Activated CD8-positive, alpha-beta T cell treated with anti-CD3 and anti-CD28 coated beads, Interleukin-2, amount 10 ng/mL, durations not matched to agents 7 days and 5 days (primary cell): ENCODE measurements at regions of chr17 and their contacts with region 1.

Region 1: DNA sequence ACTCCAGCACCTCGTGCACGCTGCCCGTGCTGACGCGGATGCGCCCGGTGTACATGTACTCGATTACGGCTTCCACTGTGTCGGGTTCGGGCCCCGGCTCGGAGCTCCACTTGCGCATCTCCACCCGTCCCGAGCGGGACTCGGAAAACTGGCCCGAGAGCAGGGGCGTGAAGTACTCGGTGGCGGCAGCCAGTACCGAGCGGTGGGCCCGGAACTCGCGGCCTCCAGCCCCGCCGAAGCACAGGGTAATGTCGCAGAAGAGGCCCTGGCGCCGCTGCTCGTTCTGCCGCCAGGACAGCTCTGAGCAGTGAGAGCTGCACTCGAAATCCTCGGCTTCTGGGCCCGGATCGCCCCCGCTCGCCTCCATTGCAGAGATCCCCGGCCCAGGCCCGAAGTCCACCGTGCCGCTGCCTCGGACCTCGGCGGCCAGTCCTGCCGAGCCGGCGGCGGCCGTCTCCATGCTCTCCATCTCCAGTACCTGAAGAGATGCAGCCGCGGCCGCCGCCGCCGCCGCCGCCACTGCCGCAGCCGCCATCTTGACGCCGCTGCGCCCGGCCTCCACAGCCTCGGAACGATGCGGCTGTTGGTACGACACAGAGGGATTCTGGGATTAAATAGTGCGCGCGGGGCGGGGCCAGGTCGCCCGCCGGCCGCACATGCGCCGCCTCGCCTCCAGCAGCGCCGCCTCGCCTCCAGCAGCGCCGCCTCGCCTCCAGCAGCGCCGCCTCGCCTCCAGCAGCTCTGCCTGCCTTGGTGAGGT is at the start of gene KLHL11:
- DNase-seq: peak; percentile 92
- ATAC-seq: peak; percentile 94
- H3K4me3 Mint-ChIP-seq: no peak within 1 kb of the TSS
- H3K27ac Mint-ChIP-seq: no peak within 1 kb of the TSS
- H3K4me1 Mint-ChIP-seq: peaks cover 25% of the 10 kb centered on the region
- H3K27me3 Mint-ChIP-seq: no peaks in the 10 kb centered on the region
- total RNA-seq, gene KLHL11: 12.3 to 13.2 TPM

Region 2: DNA sequence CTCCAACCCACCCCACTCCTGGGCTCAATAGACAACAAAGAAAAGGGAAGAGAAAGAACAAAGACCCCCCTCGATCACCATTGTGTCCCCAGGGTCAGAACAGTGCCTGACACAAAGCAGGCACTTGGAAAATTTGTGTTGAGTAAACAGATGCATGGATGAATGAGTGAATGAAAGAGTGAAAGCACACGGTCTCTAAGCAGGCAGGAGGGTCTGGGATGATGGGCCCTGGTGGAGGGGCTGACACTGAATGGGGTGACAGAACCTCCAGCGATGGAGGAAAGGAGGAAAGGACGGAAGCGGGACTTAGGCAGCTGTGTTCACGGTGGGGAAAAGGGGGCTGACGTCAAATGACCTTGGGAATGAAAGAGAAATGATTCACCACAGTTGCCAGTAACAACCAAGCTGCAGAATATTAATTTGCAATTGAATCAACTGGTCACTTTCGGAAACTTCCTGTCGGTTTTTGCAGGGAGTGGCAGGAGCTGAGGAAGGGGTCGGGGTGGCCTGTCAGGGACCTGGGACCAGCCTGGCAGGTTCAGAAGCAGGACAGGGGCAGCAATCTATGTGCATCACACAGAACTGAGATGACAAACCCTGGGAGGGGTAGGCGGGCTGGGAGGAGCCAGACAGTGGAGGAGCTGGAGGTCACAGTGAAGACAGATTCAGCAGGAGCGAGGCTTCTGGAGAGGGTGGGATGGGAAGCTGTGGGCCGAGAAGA is 159.6 kb before region 1 on chr17:
- CTCF ChIA-PET with region 1: no interaction called
- POLR2A ChIA-PET with region 1: no interaction called
- DNase-seq: no peak
- ATAC-seq: no peak
- H3K4me3 Mint-ChIP-seq: no peak overlapping the region
- H3K27ac Mint-ChIP-seq: no peak overlapping the region
- H3K4me1 Mint-ChIP-seq: peaks cover 4% of the 10 kb centered on the region
- H3K27me3 Mint-ChIP-seq: peaks cover 11% of the 10 kb centered on the region

Region 3: DNA sequence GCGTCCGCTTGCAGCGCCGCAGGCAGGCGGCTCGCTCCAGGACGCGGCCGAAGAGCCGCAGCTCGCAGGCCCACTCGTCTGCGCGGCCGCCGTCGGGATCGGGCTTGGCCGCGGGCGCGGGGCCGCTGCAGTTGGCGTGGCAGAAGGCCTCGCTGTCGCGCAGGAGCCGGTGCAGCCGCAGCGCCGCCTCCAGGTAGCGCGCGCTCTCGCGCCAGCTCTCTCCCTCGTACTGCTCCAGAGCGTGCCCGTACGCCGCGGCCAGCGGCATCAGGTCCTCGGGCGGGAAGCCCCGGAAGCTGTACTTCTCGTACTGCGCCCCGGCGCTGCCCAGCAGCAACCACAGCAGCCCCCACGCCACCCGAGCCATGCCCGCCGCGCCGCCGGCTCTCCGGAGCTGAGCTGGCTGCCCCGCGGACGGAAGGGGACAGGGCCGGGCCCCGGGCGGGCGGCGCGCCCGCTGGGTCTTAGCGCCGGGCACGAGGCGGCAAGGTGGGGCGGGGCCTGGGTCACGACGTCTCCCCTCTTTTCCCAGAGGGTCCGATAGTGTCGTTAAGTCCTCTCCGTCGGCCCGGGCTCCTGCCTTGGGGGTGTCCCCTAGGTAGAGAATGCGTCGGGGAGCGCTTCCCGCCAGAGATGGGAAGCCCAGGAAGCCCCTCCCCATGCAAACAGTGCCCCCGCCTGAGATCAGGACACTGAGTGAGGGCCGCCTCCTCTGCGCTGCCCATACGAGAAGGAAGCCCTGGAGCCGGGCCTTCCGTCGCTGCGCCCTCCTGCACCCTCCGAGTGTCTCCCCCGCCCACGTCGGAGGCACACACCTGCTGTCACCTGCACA is 53.3 kb before region 1 on chr17 and contains the start of gene P3H4:
- CTCF ChIA-PET with region 1: interaction called, 14 read pairs
- POLR2A ChIA-PET with region 1: interaction called, 4 read pairs
- DNase-seq: peak; percentile 80
- ATAC-seq: peak; percentile 94
- H3K4me3 Mint-ChIP-seq: peak within 1 kb of the TSS; percentile 72
- H3K27ac Mint-ChIP-seq: peak within 1 kb of the TSS; percentile 55
- H3K4me1 Mint-ChIP-seq: peaks cover 12% of the 10 kb centered on the region
- H3K27me3 Mint-ChIP-seq: peaks cover 15% of the 10 kb centered on the region
- total RNA-seq, gene P3H4: 2.7 to 3.5 TPM